Endothelial cell of umbilical vein (primary cell): ENCODE measurements at regions of chr10 and their contacts with region 1.

Region 1: DNA sequence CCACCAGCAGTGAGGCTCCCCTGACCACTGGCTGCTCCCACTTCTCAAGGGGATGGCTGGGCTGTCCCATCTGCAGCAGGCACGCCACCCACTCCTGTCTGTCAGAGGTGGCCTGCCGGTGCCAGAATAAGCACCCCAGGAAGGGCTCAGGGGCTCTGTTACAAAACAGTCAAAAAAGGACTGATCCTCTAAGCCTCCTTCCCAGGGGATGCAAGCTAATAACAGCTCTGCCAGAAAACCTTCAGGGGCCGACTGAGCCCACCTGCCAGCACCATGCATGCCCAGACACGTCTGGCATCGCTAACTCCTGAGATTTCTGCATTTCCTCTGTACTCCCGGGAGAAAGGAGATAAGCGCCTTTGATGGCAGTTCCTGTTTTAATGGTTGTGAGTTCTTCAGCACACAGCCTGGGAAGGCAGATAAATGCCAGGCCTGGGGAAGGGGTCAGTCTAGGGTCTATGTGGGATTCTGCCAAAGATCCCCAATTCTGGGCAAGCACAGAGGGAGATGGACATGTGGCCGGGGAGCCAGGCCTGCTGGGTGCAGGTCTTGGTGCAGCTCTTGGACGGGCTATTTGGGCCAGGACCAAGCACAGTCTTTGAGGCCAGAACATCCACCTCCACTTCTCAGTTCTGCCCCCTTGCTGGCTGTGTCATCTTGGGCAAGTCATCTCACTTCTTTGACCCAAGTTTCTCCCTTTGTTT is 128.4 kb downstream of the ARHGAP22 start:
- DNase-seq: peak; percentile 71
- H3K4me3 ChIP-seq: no peak overlapping the region
- H3K27ac ChIP-seq: no peak overlapping the region
- H3K4me1 ChIP-seq: peaks cover 20% of the 10 kb centered on the region
- H3K27me3 ChIP-seq: no peaks in the 10 kb centered on the region
- CTCF ChIP-seq: no peak
- POLR2A ChIP-seq: no peak

Region 2: DNA sequence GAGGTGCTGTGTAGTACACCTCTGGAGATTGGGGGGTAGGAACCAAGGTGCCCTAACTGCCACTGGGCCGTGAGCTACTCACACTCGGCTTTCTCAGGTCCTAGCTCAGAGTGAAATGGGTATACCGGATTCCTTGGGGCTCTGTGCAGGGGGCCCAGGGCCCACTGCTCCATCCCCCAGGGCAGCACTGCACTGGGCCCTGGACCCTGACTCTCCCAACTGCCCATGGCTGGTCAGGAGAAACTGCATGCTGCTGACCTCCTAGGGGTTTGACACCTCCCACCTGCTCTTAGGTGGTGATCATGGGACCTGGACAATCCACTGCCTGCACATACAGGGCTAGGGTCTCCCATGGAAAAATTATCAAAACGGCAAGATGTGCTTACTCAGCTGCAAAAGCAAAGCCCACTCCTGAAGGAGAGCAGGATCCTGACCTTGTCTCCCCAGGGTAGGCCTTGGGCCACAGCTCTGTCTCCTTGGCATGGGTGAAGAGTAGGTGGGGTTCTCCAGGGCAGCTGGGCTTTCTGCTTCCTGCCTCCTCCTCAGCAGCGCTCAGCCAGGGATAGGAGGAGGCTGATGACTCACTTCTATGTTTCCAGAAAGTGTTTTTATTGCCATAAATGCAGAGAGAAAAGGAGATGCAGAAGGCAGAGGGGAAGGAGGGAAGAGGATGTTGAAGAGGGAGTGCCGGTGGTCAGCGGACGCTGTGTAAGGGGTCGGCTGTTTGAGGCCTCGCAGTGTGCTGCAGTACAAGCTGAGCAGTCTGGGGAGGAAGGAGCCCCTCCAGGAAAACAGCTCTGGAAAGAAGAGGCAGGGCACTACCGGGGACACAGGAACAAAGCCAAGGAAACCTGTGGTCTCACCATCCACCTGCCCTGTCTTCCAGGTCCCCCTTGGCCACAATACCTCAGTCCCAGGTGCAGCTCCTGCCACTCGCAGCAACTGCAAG is 20.7 kb after region 1 on chr10:
- CTCF ChIA-PET with region 1: interaction called, 3 read pairs
- POLR2A ChIA-PET with region 1: interaction called, 4 read pairs
- dilution Hi-C with region 1: no loop called
- intact Hi-C with region 1: loop called (anchors 2 kb)
- DNase-seq: peak; percentile 81
- H3K4me3 ChIP-seq: no peak overlapping the region
- H3K27ac ChIP-seq: peak overlapping the region; percentile 5
- H3K4me1 ChIP-seq: peaks cover 11% of the 10 kb centered on the region
- H3K27me3 ChIP-seq: no peaks in the 10 kb centered on the region
- CTCF ChIP-seq: no peak
- POLR2A ChIP-seq: no peak

Region 3: DNA sequence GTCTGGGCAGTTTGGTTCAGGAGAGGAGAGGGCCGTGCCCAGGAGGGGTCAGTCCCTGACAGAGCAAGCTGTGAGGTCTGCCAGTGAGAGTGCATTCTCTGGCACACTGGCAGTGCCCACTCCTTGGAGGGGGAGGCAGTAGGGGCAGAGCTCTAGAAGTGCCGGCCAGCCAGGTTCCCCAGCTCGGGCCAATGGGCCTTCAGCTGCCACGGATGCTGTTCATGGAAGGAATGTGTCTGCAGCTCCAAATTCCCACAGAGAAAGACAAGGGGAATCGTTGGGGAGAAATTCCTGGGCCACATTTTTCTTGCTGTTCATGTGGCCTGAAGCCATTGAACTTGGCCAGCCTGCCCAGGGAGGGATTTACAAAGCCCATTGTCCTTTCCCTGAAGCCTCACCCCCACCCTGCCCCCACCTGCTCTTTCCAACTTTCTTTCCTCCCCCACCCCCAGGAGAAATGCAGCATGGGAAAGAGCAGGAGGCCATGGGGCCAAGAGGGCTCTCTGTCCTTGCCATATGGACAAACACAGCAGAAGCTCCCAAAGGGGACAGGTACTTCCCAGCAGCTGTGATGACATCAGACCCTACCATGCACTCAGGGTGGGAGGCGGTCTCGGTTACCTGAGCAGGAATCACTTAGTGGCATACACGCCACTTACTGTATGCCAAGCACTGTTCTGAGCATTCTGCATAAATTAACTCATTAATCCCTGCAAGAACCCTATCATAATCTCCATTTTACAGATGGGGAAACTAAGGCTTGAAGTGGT is 57.7 kb after region 1 on chr10:
- CTCF ChIA-PET with region 1: no interaction called
- POLR2A ChIA-PET with region 1: interaction called, 13 read pairs
- dilution Hi-C with region 1: no loop called
- intact Hi-C with region 1: no loop called
- DNase-seq: no peak
- H3K4me3 ChIP-seq: no peak overlapping the region
- H3K27ac ChIP-seq: no peak overlapping the region
- H3K4me1 ChIP-seq: no peaks in the 10 kb centered on the region
- H3K27me3 ChIP-seq: no peaks in the 10 kb centered on the region
- CTCF ChIP-seq: no peak
- POLR2A ChIP-seq: no peak